ENCODE measurements at regions of chr14 and their contacts with region 1.

Region 1: GRCh38 chr14:99884834-99885648 is 91.8 kb downstream of the EML1 start:
- DNase-seq: peak; percentile 56
- ATAC-seq: peak; percentile 51
- H3K4me3 ChIP-seq: no peak overlapping the region
- H3K4me3 Mint-ChIP-seq: no peak overlapping the region
- H3K27ac ChIP-seq: no peak overlapping the region
- H3K27ac Mint-ChIP-seq: no peak overlapping the region
- H3K4me1 ChIP-seq: no peaks in the 10 kb centered on the region
- H3K4me1 Mint-ChIP-seq: no peaks in the 10 kb centered on the region
- H3K27me3 ChIP-seq: peaks cover 0 to 7% (median 0%) of the 10 kb centered on the region in 4 experiments
- H3K27me3 Mint-ChIP-seq: peaks cover 6% of the 10 kb centered on the region
- CTCF ChIP-seq: peak; percentile 92

Region 2: GRCh38 chr14:99899578-99900178 is 14.6 kb after region 1 on chr14:
- CTCF ChIA-PET with region 1: interaction called, 12 read pairs
- POLR2A ChIA-PET with region 1: no interaction called
- intact Hi-C with region 1: no loop called
- DNase-seq: peak; percentile 12
- ATAC-seq: no peak
- H3K4me3 ChIP-seq: no peak overlapping the region
- H3K4me3 Mint-ChIP-seq: no peak overlapping the region
- H3K27ac ChIP-seq: no peak overlapping the region
- H3K27ac Mint-ChIP-seq: no peak overlapping the region
- H3K4me1 ChIP-seq: no peaks in the 10 kb centered on the region
- H3K4me1 Mint-ChIP-seq: no peaks in the 10 kb centered on the region
- H3K27me3 ChIP-seq: peaks cover 0 to 6% (median 0%) of the 10 kb centered on the region in 4 experiments
- H3K27me3 Mint-ChIP-seq: peaks cover 12% of the 10 kb centered on the region
- CTCF ChIP-seq: peak; percentile 78